ENCODE measurements at regions of chr11 and their contacts with region 1.

Region 1: GRCh38 chr11:13955971-13956421 is 6.5 kb upstream of the SPON1 start:
- DNase-seq: peak; percentile 33 to 78 (median 66)
- H3K4me3 ChIP-seq: no peak overlapping the region
- H3K27ac ChIP-seq: no peak overlapping the region
- H3K4me1 ChIP-seq: no peaks in the 10 kb centered on the region
- H3K27me3 ChIP-seq: no peaks in the 10 kb centered on the region
- CTCF ChIP-seq: peak; percentile 67 to 88 (median 79)
- EP300 ChIP-seq: no peak
- POLR2A ChIP-seq: no peak

Region 2: GRCh38 chr11:14148653-14149273 is 192.8 kb after region 1 on chr11:
- intact Hi-C with region 1: loop called in 2 of 4 experiments (anchors 5 to 10 kb)
- DNase-seq: no peak
- H3K4me3 ChIP-seq: no peak overlapping the region
- H3K27ac ChIP-seq: no peak overlapping the region
- H3K4me1 ChIP-seq: no peaks in the 10 kb centered on the region
- H3K27me3 ChIP-seq: no peaks in the 10 kb centered on the region
- CTCF ChIP-seq: peak in 2 of 3 donors; percentile 40 to 58
- EP300 ChIP-seq: no peak
- POLR2A ChIP-seq: no peak

Region 3: DNA sequence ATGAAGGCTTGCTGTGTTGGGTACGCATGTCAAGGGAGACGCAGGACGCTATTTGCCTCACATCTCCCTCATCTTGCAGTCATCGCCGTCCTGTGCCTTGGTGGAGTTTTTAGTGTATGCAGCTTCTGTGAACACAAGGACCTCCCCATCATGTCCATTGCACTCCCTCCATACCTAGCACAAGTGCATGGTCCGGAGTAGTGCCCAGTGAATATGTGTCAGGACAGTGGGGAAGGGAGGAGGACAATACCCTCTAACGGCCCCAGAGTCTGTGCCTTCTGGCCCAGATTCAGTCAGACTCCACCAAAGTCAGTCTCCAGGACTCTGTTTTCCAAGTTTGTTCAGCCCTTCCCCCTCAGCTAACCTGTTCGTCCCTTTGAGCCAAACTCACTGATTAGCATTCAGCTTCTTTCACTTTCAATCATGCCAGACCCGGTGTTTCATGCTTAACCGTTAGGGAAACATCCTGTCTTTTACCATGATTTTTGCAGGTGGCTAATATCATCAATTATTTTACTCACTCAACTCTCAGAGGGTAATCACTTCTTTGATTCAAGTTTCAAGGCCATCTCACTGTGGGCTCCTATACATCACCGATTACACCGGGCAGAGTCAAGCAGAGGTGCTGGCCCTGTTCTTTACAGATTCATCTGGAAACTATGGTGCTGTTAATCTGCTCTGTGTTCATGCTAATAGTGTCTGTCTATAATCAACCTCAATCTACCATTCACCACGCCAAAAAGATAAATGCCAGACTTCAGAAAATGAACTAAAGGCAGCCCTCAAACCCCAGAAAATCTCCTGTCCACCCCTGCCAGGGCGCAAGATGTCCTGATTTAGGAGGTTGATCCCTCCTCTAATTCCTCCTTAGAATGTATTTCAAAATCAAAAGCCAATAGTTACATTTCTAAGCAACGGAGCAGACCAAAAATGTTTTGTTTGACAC is 246.5 kb after region 1 on chr11:
- intact Hi-C with region 1: loop called in 1 of 4 experiments (anchors 5 kb)
- DNase-seq: no peak
- H3K4me3 ChIP-seq: no peak overlapping the region
- H3K27ac ChIP-seq: no peak overlapping the region
- H3K4me1 ChIP-seq: peaks cover 2% of the 10 kb centered on the region
- H3K27me3 ChIP-seq: no peaks in the 10 kb centered on the region
- CTCF ChIP-seq: no peak
- EP300 ChIP-seq: no peak
- POLR2A ChIP-seq: no peak

Region 4: GRCh38 chr11:14249121-14249963 is 293.3 kb after region 1 on chr11:
- intact Hi-C with region 1: loop called (anchors 2 to 5 kb)
- DNase-seq: peak; percentile 38 to 75 (median 72)
- H3K4me3 ChIP-seq: no peak overlapping the region
- H3K27ac ChIP-seq: no peak overlapping the region
- H3K4me1 ChIP-seq: peaks cover 6% of the 10 kb centered on the region
- H3K27me3 ChIP-seq: no peaks in the 10 kb centered on the region
- CTCF ChIP-seq: peak; percentile 56 to 89 (median 87)
- EP300 ChIP-seq: no peak
- POLR2A ChIP-seq: no peak